ENCODE measurements at regions of chr6 and their contacts with region 1.

Region 1: DNA sequence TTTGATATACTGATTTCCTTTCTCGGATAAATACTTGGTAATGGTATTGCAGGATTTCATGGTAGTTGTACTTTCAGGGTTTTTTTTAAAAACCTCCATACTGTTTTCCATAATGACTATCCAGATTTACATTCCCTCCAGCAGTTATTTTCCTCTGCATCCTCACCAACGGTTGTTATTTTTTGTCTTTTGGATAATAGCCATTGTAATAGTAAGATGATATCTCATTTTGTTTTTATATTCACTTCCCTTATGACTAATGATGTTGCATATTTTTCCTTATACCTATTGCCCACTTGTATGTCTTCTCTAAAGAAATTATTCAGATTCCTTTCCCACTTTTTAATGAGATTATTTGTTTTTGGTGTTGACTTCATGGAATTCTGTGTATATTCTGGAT is 231.0 kb downstream of the MEI4 start:
- DNase-seq: no peak
- ATAC-seq: no peak
- H3K4me3 ChIP-seq: no peak overlapping the region
- H3K27ac ChIP-seq: no peak overlapping the region
- H3K4me1 ChIP-seq: peaks cover 33% of the 10 kb centered on the region
- H3K27me3 ChIP-seq: no peaks in the 10 kb centered on the region
- CTCF ChIP-seq: no peak
- EP300 ChIP-seq: no peak
- POLR2A ChIP-seq: no peak
- RAD21 ChIP-seq: no peak

Region 2: GRCh38 chr6:77774457-77774856 is 109.4 kb before region 1 on chr6:
- CTCF ChIA-PET with region 1: no interaction called
- POLR2A ChIA-PET with region 1: no interaction called
- in situ Hi-C with region 1: no loop called
- intact Hi-C with region 1: no loop called
- DNase-seq: no peak
- ATAC-seq: no peak
- H3K4me3 ChIP-seq: no peak overlapping the region
- H3K27ac ChIP-seq: no peak overlapping the region
- H3K4me1 ChIP-seq: no peaks in the 10 kb centered on the region
- H3K27me3 ChIP-seq: no peaks in the 10 kb centered on the region
- CTCF ChIP-seq: no peak
- EP300 ChIP-seq: no peak
- POLR2A ChIP-seq: no peak
- RAD21 ChIP-seq: no peak

Region 3: DNA sequence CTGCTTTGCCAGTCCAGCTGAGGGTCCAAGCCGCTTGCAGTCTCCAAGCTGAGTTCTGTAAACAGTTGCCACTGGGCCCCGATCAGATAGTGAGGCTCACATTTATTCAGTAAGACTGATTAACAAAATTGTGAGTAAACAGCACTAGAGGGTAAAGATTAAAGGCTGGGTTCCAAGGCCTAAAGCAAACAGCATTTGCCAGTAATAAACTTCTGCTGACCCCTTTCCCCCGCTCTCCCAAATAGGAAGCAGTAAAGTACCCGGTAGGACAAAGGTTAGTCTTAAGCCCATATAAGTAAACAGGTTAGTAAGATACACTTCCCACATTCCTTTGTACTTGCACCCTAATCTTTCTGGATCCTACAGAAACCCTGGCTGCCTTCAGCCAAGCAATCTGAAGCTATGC is 49.3 kb before region 1 on chr6:
- CTCF ChIA-PET with region 1: no interaction called
- POLR2A ChIA-PET with region 1: no interaction called
- in situ Hi-C with region 1: no loop called
- intact Hi-C with region 1: loop called (anchors 1 kb)
- DNase-seq: peak; percentile 98
- ATAC-seq: peak; percentile 100
- H3K4me3 ChIP-seq: peak overlapping the region in 1 of 3 experiments; percentile 37; a peak in 2 of 6 replicates
- H3K27ac ChIP-seq: peak overlapping the region; percentile 61
- H3K4me1 ChIP-seq: peaks cover 53% of the 10 kb centered on the region
- H3K27me3 ChIP-seq: no peaks in the 10 kb centered on the region
- CTCF ChIP-seq: no peak
- EP300 ChIP-seq: peak in 1 of 2 experiments; percentile 96; a peak in 2 of 4 replicates
- POLR2A ChIP-seq: no peak
- RAD21 ChIP-seq: 0 out of 2 replicates have a peak, but pooled peaks have one; percentile 23

Region 4: GRCh38 chr6:78020586-78020985 is 136.7 kb after region 1 on chr6:
- CTCF ChIA-PET with region 1: no interaction called
- POLR2A ChIA-PET with region 1: no interaction called
- in situ Hi-C with region 1: no loop called
- intact Hi-C with region 1: loop called (anchors 2 kb)
- DNase-seq: no peak
- ATAC-seq: no peak
- H3K4me3 ChIP-seq: no peak overlapping the region
- H3K27ac ChIP-seq: no peak overlapping the region
- H3K4me1 ChIP-seq: no peaks in the 10 kb centered on the region
- H3K27me3 ChIP-seq: no peaks in the 10 kb centered on the region
- CTCF ChIP-seq: no peak
- EP300 ChIP-seq: no peak
- POLR2A ChIP-seq: no peak
- RAD21 ChIP-seq: no peak

Region 5: DNA sequence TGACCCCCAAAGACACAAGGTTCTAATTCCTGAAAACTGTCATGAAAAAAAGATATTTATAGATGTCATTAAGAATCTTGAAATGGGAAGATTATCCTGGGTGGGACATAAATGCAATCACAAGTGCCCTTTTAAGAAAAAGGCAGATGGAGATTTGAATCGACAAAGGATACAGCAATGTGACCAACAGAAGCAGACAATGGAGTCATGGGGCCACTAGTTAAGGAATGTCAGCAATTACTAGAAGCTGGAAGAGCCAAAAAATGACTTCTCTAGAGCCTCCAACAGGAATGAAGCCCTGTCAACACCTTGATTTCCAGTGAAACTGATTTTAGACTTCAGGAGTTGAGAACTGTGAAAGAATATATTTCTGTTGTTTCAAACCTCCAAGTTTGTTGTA is 217.5 kb after region 1 on chr6:
- CTCF ChIA-PET with region 1: no interaction called
- POLR2A ChIA-PET with region 1: no interaction called
- in situ Hi-C with region 1: no loop called
- intact Hi-C with region 1: no loop called
- DNase-seq: no peak
- ATAC-seq: no peak
- H3K4me3 ChIP-seq: no peak overlapping the region
- H3K27ac ChIP-seq: no peak overlapping the region
- H3K4me1 ChIP-seq: no peaks in the 10 kb centered on the region
- H3K27me3 ChIP-seq: no peaks in the 10 kb centered on the region
- CTCF ChIP-seq: no peak
- EP300 ChIP-seq: no peak
- POLR2A ChIP-seq: no peak
- RAD21 ChIP-seq: no peak